Left cardiac atrium (tissue), 4 donors: ENCODE measurements at regions of chr3 and their contacts with region 1.

Region 1: GRCh38 chr3:105686278-105686897 is 182.4 kb downstream of the CBLB start:
- DNase-seq: no peak
- ATAC-seq: no peak

Region 2: GRCh38 chr3:105853801-105854432 is 167.5 kb after region 1 on chr3:
- intact Hi-C with region 1: loop called in 1 of 2 experiments (anchors 10 kb)
- DNase-seq: no peak
- ATAC-seq: no peak

Region 3: GRCh38 chr3:106609666-106610301 is 923.4 kb after region 1 on chr3:
- intact Hi-C with region 1: loop called (anchors 5 kb)
- DNase-seq: peak; percentile 24
- ATAC-seq: peak; percentile 85 to 89